CD8-positive, alpha-beta T cell (primary cell): ENCODE measurements at regions of chr16 and their contacts with region 1.

Region 1: DNA sequence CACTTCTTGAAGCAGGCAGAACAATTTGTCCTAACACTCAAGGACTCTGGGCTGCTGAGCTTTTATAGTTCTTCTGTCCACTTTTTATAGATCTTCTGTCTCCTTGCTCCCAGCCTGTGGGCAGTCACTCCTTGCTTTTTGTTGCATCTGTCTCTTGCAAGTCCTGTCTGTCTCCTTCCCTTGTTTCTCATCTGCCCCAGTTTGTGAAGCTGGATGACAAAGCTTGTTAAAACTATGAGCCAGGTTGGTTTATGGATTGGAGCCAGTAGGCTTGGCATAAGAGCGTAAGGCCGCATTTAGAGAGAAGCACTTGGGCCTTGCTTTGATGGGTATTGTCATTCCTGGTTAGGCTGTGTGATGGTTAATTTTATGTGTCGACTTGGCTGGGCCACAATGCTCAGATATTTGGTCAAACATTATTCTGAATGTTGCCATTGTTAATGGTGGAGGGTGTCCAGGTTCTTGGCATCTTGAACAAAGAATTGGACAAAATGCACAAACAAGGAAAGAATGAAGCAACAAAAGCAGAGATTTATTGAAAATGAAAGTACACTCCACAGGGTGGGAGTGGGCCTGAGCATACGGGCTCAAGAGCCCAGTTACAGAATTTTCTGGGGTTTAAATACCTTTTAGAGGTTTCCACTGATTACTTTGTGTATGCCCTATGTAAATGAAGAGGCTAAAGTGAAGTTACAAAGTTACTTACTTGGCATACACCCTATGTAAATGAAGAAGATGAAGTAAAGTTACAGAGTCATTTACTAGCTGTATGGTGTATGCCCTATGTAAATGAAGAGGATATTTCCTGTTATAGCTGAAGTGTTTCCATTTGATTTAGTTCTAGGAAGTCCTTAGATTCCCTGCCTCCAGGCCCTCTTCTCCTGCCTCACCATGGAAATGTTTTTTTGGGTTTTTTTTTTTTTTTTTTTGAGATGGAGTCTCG is 8.0 kb upstream of the CPPED1 start:
- DNase-seq: no peak
- ATAC-seq: no peak
- H3K4me3 ChIP-seq: no peak overlapping the region
- H3K4me3 Mint-ChIP-seq: no peak overlapping the region
- H3K27ac ChIP-seq: no peak overlapping the region
- H3K27ac Mint-ChIP-seq: no peak overlapping the region
- H3K4me1 ChIP-seq: no peaks in the 10 kb centered on the region
- H3K4me1 Mint-ChIP-seq: no peaks in the 10 kb centered on the region
- H3K27me3 ChIP-seq: no peaks in the 10 kb centered on the region
- H3K27me3 Mint-ChIP-seq: peaks cover 5% of the 10 kb centered on the region
- CTCF ChIP-seq: no peak

Region 2: DNA sequence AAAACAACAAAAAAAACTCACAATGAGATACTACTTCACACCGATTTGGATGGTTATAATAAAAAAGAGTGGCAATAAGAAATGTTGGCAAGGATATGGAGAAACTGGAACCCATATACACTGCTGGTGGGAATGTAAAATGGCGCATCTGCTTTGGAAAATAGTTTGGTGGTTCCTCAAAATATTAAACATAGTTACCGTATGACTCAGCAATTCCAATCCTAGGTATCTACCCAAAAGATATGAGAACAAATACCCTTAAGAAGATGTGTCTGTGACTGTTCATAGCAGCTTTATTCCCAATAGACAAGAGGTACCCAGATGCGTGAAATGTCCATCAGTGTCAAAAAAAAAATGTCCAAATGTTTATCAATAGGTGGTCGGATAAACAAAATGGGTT is 15.2 kb before region 1 on chr16:
- CTCF ChIA-PET with region 1: no interaction called
- POLR2A ChIA-PET with region 1: no interaction called
- intact Hi-C with region 1: loop called in 1 of 2 experiments (anchors 2 kb)
- DNase-seq: no peak
- ATAC-seq: no peak
- H3K4me3 ChIP-seq: no peak overlapping the region
- H3K4me3 Mint-ChIP-seq: no peak overlapping the region
- H3K27ac ChIP-seq: no peak overlapping the region
- H3K27ac Mint-ChIP-seq: no peak overlapping the region
- H3K4me1 ChIP-seq: no peaks in the 10 kb centered on the region
- H3K4me1 Mint-ChIP-seq: peaks cover under 1% of the 10 kb centered on the region
- H3K27me3 ChIP-seq: peaks cover 0 to 2% of the 10 kb centered on the region in 2 experiments
- H3K27me3 Mint-ChIP-seq: no peaks in the 10 kb centered on the region
- CTCF ChIP-seq: no peak

Region 3: DNA sequence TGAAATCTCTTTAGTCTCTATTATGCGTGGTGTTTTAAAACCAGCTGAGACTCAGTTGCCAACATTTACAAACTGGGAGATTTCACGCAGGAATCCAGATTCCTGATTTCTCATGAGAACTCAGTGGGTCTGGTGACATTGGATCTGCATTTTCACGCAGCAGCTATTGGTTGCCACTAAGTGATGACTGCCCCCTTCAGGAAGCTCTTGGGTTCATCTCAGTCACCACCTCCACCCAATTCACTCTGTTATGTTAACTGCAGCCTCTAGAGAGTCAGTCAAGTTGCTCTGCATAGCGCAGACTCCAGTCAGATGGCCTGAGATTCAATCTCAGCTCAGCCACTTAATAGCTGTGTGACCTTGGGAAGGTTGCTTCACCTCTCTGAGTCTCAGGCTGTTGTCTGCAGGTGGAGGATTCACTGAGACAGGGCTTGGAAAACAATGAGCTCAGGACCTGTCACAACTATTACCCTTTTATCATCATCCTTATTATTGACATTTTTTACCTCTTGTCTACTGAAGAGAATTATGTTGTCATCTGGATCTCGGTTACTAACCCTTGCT is 96.0 kb after region 1 on chr16:
- CTCF ChIA-PET with region 1: no interaction called
- POLR2A ChIA-PET with region 1: no interaction called
- intact Hi-C with region 1: no loop called
- DNase-seq: no peak
- ATAC-seq: no peak
- H3K4me3 ChIP-seq: no peak overlapping the region
- H3K4me3 Mint-ChIP-seq: no peak overlapping the region
- H3K27ac ChIP-seq: no peak overlapping the region
- H3K27ac Mint-ChIP-seq: no peak overlapping the region
- H3K4me1 ChIP-seq: no peaks in the 10 kb centered on the region
- H3K4me1 Mint-ChIP-seq: no peaks in the 10 kb centered on the region
- H3K27me3 ChIP-seq: peaks cover 4 to 7% of the 10 kb centered on the region in 2 experiments
- H3K27me3 Mint-ChIP-seq: peaks cover 32% of the 10 kb centered on the region
- CTCF ChIP-seq: no peak